ENCODE measurements at regions of chr11 and their contacts with region 1.

Region 1: GRCh38 chr11:118956094-118956846 is at the start of gene UPK2:
- DNase-seq: peak; percentile 73 to 89
- ATAC-seq: peak; percentile 94 to 99
- H3K4me3 ChIP-seq: no peak within 1 kb of the TSS
- H3K27ac ChIP-seq: peak within 1 kb of the TSS; percentile 27 to 65; a peak in 2 of 6 replicates
- H3K4me1 ChIP-seq: peaks cover 4% of the 10 kb centered on the region; the same call in 1 of the 3 replicates
- CTCF ChIP-seq: peak; percentile 72
- EP300 ChIP-seq: no peak
- POLR2A ChIP-seq: no peak
- RAD21 ChIP-seq: peak; percentile 95 to 97
- polyA plus RNA-seq, gene UPK2: 0.20 and 0.37 TPM in 2 replicates

Region 2: GRCh38 chr11:118791111-118791965 is 164.9 kb before region 1 on chr11 and contains the start of gene DDX6:
- CTCF ChIA-PET with region 1: interaction called, 4 read pairs
- POLR2A ChIA-PET with region 1: interaction called, 11 read pairs
- DNase-seq: peak; percentile 62 to 81
- ATAC-seq: peak; percentile 79 to 81
- H3K4me3 ChIP-seq: peak within 1 kb of the TSS; percentile 69
- H3K27ac ChIP-seq: peak within 1 kb of the TSS; percentile 100
- H3K4me1 ChIP-seq: peaks cover 23% of the 10 kb centered on the region
- CTCF ChIP-seq: no peak; the same call in 2 of the 3 replicates
- EP300 ChIP-seq: no peak
- POLR2A ChIP-seq: peak; percentile 62
- RAD21 ChIP-seq: peak in 1 of 2 experiments; percentile 14; a peak in 1 of 5 replicates
- polyA plus RNA-seq, gene DDX6: 41.4 and 43.8 TPM in 2 replicates

Region 3: GRCh38 chr11:118939953-118940598 is 16.2 kb before region 1 on chr11:
- CTCF ChIA-PET with region 1: interaction called, 32 read pairs
- POLR2A ChIA-PET with region 1: no interaction called
- DNase-seq: no peak
- ATAC-seq: peak; percentile 43 to 58; a peak in 5 of 6 replicates
- H3K4me3 ChIP-seq: no peak overlapping the region
- H3K27ac ChIP-seq: peak overlapping the region in 1 of 2 experiments; percentile 33; a peak in 1 of 6 replicates
- H3K4me1 ChIP-seq: peaks cover 10% of the 10 kb centered on the region
- CTCF ChIP-seq: no peak
- EP300 ChIP-seq: no peak
- POLR2A ChIP-seq: no peak
- RAD21 ChIP-seq: no peak

Region 4: DNA sequence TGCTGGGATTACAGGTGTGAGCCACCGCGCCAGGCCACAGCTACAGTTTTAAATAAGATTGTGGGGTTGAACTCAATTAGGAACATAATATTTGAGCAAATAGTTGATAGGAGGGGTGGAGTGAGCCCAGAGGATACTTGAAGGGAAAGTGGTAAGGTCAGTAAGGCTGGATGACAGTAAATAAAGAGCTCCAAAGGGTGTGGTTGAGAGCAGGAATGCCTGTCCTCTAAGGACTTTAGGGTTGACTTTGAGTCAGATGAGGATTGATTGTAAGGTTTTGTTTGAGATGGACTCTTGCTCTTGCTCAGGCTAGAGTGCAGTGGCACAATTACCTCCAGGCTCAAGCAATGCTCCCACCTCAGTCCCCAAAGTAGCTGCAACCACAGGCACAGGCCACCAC is 17.7 kb after region 1 on chr11:
- CTCF ChIA-PET with region 1: interaction called, 13 read pairs
- POLR2A ChIA-PET with region 1: no interaction called
- DNase-seq: no peak
- ATAC-seq: no peak
- H3K4me3 ChIP-seq: no peak overlapping the region
- H3K27ac ChIP-seq: no peak overlapping the region
- H3K4me1 ChIP-seq: no peaks in the 10 kb centered on the region
- CTCF ChIP-seq: no peak
- EP300 ChIP-seq: no peak
- POLR2A ChIP-seq: no peak
- RAD21 ChIP-seq: no peak